Caco-2 (cell line): ENCODE measurements at regions of chr6 and their contacts with region 1.

Region 1: GRCh38 chr6:141562851-141563763 is 569.6 kb upstream of the GJE1 start:
- DNase-seq: peak in 1 of 2 experiments; percentile 54
- H3K4me3 ChIP-seq: no peak overlapping the region
- H3K4me3 Mint-ChIP-seq: peak overlapping the region; percentile 49
- H3K27ac Mint-ChIP-seq: no peak overlapping the region
- H3K4me1 ChIP-seq: no peaks in the 10 kb centered on the region
- H3K4me1 Mint-ChIP-seq: peaks cover 12% of the 10 kb centered on the region
- H3K27me3 ChIP-seq: no peaks in the 10 kb centered on the region
- H3K27me3 Mint-ChIP-seq: peaks cover 6% of the 10 kb centered on the region
- CTCF ChIP-seq: peak; percentile 78 to 87

Region 2: GRCh38 chr6:141107591-141108160 is 455.4 kb before region 1 on chr6:
- CTCF ChIA-PET with region 1: no interaction called
- POLR2A ChIA-PET with region 1: no interaction called
- intact Hi-C with region 1: no loop called
- DNase-seq: no peak
- H3K4me3 ChIP-seq: no peak overlapping the region
- H3K4me3 Mint-ChIP-seq: no peak overlapping the region
- H3K27ac Mint-ChIP-seq: no peak overlapping the region
- H3K4me1 ChIP-seq: no peaks in the 10 kb centered on the region
- H3K4me1 Mint-ChIP-seq: no peaks in the 10 kb centered on the region
- H3K27me3 ChIP-seq: no peaks in the 10 kb centered on the region
- H3K27me3 Mint-ChIP-seq: no peaks in the 10 kb centered on the region
- CTCF ChIP-seq: no peak

Region 3: GRCh38 chr6:141309295-141309694 is 253.8 kb before region 1 on chr6:
- CTCF ChIA-PET with region 1: no interaction called
- POLR2A ChIA-PET with region 1: no interaction called
- intact Hi-C with region 1: loop called (anchors 2 kb)
- DNase-seq: no peak
- H3K4me3 ChIP-seq: no peak overlapping the region
- H3K4me3 Mint-ChIP-seq: no peak overlapping the region
- H3K27ac Mint-ChIP-seq: no peak overlapping the region
- H3K4me1 ChIP-seq: no peaks in the 10 kb centered on the region
- H3K4me1 Mint-ChIP-seq: no peaks in the 10 kb centered on the region
- H3K27me3 ChIP-seq: no peaks in the 10 kb centered on the region
- H3K27me3 Mint-ChIP-seq: no peaks in the 10 kb centered on the region
- CTCF ChIP-seq: peak in 1 of 2 experiments; percentile 13